ENCODE measurements at regions of chr19 and their contacts with region 1.

Region 1: DNA sequence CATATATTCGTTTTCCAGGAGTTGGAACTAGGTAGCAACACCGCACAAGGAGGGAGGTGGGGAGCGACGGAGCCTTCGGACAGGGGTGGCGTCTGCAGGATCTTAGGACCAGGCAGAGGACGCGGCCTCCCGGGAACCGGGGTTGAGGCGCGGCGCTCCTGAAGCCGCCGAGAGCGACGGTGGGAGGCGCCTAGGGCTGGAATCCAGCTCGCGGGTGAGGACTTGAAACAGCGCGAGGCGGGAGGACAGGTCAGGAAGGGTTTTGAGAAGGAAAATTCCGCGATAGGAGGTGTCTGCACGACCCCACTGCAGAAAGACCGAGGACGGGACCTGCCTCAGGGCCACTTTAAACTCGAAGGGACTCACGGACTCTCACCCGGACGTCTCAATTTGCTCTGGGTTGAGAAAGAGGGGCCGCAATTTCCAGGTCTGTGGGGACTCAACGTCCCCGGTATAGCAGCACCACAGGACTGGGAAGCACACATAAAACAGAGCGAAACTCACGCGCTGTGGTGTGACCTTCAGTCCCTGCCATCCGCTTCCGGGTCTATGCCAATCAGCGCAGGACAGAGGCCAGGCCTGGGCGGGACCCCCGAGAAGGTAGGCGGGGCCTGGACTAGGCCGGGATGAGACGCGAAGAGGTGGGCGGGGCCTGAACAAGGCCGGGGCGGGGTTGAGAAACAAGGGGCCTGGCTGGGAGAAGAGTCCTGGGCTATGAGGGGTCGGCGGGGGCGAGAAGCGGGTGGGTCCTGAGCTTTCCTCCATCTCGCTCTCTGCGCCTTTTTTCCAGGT is at the start of gene ZNF320:
- DNase-seq: peak; percentile 98
- H3K4me3 Mint-ChIP-seq: peak within 1 kb of the TSS; percentile 92
- H3K27ac Mint-ChIP-seq: peak within 1 kb of the TSS; percentile 93
- H3K4me1 Mint-ChIP-seq: peaks cover 7% of the 10 kb centered on the region
- H3K27me3 Mint-ChIP-seq: no peaks in the 10 kb centered on the region
- total RNA-seq, gene ZNF320: 8.0 and 17.8 TPM in 2 replicates

Region 2: GRCh38 chr19:52637718-52638585 is 259.4 kb before region 1 on chr19 and contains the start of gene ZNF83:
- intact Hi-C with region 1: no loop called
- DNase-seq: peak; percentile 98
- H3K4me3 Mint-ChIP-seq: peak within 1 kb of the TSS; percentile 97
- H3K27ac Mint-ChIP-seq: peak within 1 kb of the TSS; percentile 98
- H3K4me1 Mint-ChIP-seq: peaks cover 11% of the 10 kb centered on the region
- H3K27me3 Mint-ChIP-seq: no peaks in the 10 kb centered on the region
- total RNA-seq, gene ZNF83: 22.1 and 26.3 TPM in 2 replicates

Region 3: GRCh38 chr19:52786457-52787359 is 110.6 kb before region 1 on chr19 and contains the start of gene ZNF600:
- intact Hi-C with region 1: loop called (anchors 5 kb)
- DNase-seq: peak; percentile 90
- H3K4me3 Mint-ChIP-seq: peak within 1 kb of the TSS; percentile 92
- H3K27ac Mint-ChIP-seq: peak within 1 kb of the TSS; percentile 79
- H3K4me1 Mint-ChIP-seq: peaks cover 26% of the 10 kb centered on the region
- H3K27me3 Mint-ChIP-seq: no peaks in the 10 kb centered on the region
- total RNA-seq, gene ZNF600: 10.6 and 10.7 TPM in 2 replicates

Region 4: DNA sequence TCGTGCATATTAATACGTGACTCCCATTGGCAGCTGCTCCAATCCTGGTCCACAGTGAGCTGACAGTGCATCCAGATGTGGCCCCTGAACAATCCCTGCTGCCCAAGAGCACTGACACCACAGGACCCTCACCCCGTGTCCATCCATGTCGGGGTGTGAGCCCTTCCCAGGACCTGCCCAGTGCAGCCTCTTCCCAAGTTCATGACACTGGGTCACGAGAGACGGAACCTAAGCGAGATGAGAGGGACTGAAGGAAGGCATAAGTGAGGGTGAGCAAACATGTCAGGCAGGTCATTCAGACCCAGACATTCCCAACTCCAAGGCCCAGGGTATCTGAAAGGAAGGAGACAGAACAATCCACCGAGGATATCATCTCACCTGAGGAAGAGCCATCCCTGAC is 43.5 kb before region 1 on chr19:
- intact Hi-C with region 1: loop called (anchors 1 kb)
- DNase-seq: no peak
- H3K4me3 Mint-ChIP-seq: no peak overlapping the region
- H3K27ac Mint-ChIP-seq: no peak overlapping the region
- H3K4me1 Mint-ChIP-seq: peaks cover 16% of the 10 kb centered on the region
- H3K27me3 Mint-ChIP-seq: no peaks in the 10 kb centered on the region

Region 5: GRCh38 chr19:52991484-52991883 is 94.1 kb after region 1 on chr19:
- intact Hi-C with region 1: no loop called
- DNase-seq: no peak
- H3K4me3 Mint-ChIP-seq: no peak overlapping the region
- H3K27ac Mint-ChIP-seq: no peak overlapping the region
- H3K4me1 Mint-ChIP-seq: peaks cover 8% of the 10 kb centered on the region
- H3K27me3 Mint-ChIP-seq: no peaks in the 10 kb centered on the region

Region 6: DNA sequence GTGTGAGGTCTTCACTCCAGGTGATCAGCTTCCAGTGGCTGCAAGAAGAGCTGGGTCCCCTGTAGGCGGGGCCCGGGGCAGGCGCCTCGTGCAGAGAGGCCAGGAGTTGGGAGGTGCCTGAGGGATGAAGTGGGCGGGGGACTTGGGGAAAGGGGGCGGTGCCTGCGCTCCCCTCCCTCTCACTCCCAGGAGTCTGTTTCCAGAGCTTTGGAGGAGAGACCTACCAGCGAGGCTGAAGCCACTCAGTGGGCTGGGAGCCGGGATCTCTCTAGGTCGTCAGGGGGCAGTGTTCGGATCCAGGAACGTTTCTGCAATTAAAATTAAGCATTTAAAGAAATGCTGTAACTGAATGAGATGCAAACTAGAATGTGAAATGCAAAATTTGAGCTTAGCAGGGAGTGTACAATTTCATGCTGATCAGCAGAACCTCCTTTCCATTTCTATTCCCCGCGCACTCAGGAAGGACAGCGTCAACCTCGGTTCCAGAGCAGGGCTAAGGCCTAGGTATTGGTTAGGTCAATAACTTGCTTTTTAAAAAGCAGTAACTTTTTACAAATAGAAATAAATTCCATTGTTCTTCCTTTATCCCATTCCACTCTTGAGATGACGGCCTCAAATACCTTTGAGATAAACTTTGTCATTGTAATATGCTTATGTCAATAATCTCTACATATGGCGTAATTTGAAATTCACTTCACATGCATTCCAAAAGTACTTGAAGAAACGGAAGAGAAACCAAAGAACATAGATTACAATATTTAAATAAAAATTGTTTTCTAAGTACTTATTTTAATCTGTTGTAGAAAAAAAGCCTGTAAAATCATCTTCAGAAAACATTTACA is 194.3 kb after region 1 on chr19:
- intact Hi-C with region 1: no loop called
- DNase-seq: no peak
- H3K4me3 Mint-ChIP-seq: no peak overlapping the region
- H3K27ac Mint-ChIP-seq: no peak overlapping the region
- H3K4me1 Mint-ChIP-seq: peaks cover 2% of the 10 kb centered on the region
- H3K27me3 Mint-ChIP-seq: no peaks in the 10 kb centered on the region

Measured in activated CD4-positive, alpha-beta T cell treated with anti-CD3 and anti-CD28 coated beads, Interleukin-2, amount 10 ng/mL, durations not matched to agents 24 days and 14 days (primary cell).